ENCODE measurements at regions of chr9 and their contacts with region 1.

Region 1: DNA sequence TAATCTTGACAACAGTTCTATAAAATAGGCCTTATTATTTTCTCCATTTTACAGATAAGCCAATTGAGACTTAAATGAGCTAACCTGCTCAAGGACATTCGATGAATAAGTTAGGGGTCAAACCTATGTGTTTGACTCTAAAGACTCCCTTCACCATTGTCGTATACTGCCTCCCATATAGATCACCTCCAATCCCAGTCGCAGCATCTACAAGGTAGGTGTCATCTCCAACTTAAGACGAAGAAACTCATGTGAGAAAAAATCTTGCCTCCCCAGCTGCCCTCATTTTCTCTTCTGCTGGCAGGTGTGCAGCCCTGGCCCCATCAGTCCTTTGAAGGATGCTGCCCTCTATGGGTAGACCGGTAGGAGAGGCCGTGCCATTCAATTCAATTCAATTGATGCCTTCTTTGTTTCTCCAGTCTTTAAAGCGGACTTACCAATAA is 75.2 kb upstream of the SMARCA2 start:
- DNase-seq: peak; percentile 47
- H3K4me3 Mint-ChIP-seq: no peak overlapping the region
- H3K27ac Mint-ChIP-seq: no peak overlapping the region
- H3K4me1 Mint-ChIP-seq: no peaks in the 10 kb centered on the region
- H3K27me3 Mint-ChIP-seq: peaks cover 32% of the 10 kb centered on the region
- CTCF ChIP-seq: peak; percentile 58

Region 2: DNA sequence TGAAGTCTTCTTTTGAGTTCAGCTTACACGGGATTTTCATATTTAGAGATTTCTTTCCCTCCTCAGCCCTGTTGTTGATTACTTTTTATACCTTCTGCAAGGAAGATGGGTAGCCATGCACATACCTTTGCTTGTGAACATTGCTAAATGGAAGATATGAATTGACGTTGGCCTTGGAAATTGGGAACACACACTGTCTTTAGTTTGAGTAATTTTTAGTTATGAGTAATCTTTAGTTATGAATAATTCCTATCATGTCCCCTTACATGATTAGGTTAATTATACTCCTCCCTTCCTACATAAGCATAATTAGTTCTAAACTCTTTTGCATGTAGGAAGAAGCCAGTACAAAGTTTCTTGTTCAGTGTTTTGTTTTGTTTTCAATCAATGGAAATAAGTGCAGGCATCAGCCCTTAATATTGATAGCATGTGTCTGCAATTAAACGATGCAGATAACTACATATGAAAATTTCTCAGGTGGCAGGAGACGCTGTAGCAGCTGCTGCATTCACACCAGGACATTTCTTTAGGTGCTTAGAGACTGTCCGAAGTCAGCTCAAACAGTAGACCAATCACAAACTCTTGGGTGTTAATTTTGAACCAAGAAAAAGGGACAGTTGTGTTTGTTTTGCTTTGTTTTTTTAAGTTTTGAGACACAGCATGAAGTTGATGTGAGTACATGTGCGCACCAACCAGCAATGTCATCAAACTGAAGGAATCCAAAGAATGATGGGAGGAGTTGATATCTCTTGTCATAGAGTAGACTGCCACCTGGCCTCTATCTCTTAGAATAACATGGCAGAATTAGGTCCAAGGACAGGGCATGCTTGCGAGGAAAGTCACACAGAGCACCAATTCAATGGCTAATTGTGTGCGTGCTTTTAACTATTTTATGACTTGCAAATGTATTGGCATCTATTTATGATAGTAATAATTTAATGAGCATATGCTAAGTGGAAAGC is 126.6 kb after region 1 on chr9:
- CTCF ChIA-PET with region 1: interaction called, 4 read pairs
- POLR2A ChIA-PET with region 1: no interaction called
- intact Hi-C with region 1: loop called (anchors 2 kb)
- DNase-seq: no peak
- H3K4me3 Mint-ChIP-seq: no peak overlapping the region
- H3K27ac Mint-ChIP-seq: no peak overlapping the region
- H3K4me1 Mint-ChIP-seq: no peaks in the 10 kb centered on the region
- H3K27me3 Mint-ChIP-seq: no peaks in the 10 kb centered on the region
- CTCF ChIP-seq: no peak